Activated naive CD4-positive, alpha-beta T cell treated with anti-CD3 and anti-CD28 coated beads for 36 hours (primary cell): ENCODE measurements at regions of chr4 and their contacts with region 1.

Region 1: GRCh38 chr4:80173401-80173800 is 23.9 kb upstream of the PRDM8 start:
- DNase-seq: peak; percentile 79
- H3K4me3 Mint-ChIP-seq: no peak overlapping the region
- H3K27ac Mint-ChIP-seq: peak overlapping the region; percentile 46
- H3K4me1 Mint-ChIP-seq: peaks cover 51% of the 10 kb centered on the region
- H3K27me3 Mint-ChIP-seq: no peaks in the 10 kb centered on the region

Region 2: GRCh38 chr4:78656968-78657445 is 1516.4 kb before region 1 on chr4:
- CTCF ChIA-PET with region 1: no interaction called
- intact Hi-C with region 1: loop called (anchors 10 kb)
- DNase-seq: peak; percentile 45
- H3K4me3 Mint-ChIP-seq: peak overlapping the region; percentile 32
- H3K27ac Mint-ChIP-seq: peak overlapping the region; percentile 84
- H3K4me1 Mint-ChIP-seq: peaks cover 45% of the 10 kb centered on the region
- H3K27me3 Mint-ChIP-seq: no peaks in the 10 kb centered on the region

Region 3: DNA sequence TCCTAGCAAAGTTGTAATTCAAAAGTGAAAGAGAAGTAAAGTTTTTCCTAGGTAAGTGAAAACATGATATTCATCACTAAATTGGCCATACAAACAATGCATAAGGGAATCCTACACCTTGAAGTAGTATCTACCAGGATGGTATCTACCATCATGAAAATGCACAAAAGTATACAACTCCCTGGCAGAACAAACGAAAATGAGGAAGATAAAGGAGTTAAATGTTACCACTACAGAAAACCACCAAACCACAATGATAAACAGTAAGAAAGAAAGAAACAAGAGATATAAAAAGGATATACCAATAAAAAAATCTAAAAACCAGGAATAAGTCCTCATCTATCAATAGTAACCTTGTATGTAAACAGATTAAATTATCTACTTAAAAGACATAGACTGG is 792.2 kb before region 1 on chr4:
- CTCF ChIA-PET with region 1: no interaction called
- intact Hi-C with region 1: no loop called
- DNase-seq: no peak
- H3K4me3 Mint-ChIP-seq: no peak overlapping the region
- H3K27ac Mint-ChIP-seq: no peak overlapping the region
- H3K4me1 Mint-ChIP-seq: no peaks in the 10 kb centered on the region
- H3K27me3 Mint-ChIP-seq: no peaks in the 10 kb centered on the region

Region 4: DNA sequence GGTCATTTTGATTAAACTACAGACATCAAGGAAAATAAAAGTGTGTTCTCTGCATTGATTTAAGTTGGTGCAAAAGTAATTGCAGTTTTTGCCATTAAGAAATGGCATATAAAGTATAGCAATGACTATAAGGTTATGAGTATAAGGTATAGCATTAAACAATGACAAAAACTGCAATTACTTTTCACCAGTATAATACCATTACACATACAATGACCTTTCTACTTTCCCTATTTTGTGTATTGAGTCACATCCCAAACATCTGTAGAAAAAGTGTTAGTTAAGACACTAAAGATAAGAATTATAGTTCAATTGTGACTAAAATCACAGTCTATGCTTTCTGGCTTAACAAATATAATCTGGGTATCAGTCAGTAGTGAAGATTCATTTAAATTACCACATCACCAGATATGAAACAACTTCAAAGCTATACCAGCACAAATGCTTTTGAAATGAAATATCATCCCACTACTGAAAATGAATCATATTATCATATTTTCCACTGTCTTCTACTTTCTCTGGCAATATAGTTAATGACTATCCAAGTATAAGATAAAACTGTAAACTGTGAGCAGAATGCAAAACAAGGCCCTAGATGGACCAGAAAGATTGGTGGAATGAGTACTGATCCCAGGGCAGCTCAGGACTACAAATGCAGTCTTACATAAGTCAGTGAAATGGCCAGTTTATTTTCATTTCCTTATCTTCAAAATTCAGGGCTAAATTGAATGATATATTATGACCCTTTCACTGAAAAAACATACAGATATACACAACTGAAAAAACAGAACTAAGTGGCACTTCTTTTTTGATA is 341.5 kb before region 1 on chr4:
- CTCF ChIA-PET with region 1: no interaction called
- intact Hi-C with region 1: loop called (anchors 2 kb)
- DNase-seq: no peak
- H3K4me3 Mint-ChIP-seq: no peak overlapping the region
- H3K27ac Mint-ChIP-seq: no peak overlapping the region
- H3K4me1 Mint-ChIP-seq: peaks cover 12% of the 10 kb centered on the region
- H3K27me3 Mint-ChIP-seq: peaks cover 8% of the 10 kb centered on the region

Region 5: GRCh38 chr4:80036949-80037685 is 136.3 kb before region 1 on chr4:
- CTCF ChIA-PET with region 1: no interaction called
- intact Hi-C with region 1: loop called (anchors 1 kb)
- DNase-seq: no peak
- H3K4me3 Mint-ChIP-seq: peak overlapping the region; percentile 70
- H3K27ac Mint-ChIP-seq: peak overlapping the region; percentile 86
- H3K4me1 Mint-ChIP-seq: peaks cover 32% of the 10 kb centered on the region
- H3K27me3 Mint-ChIP-seq: no peaks in the 10 kb centered on the region

Region 6: GRCh38 chr4:80138551-80139538 is 34.6 kb before region 1 on chr4:
- CTCF ChIA-PET with region 1: no interaction called
- intact Hi-C with region 1: loop called (anchors 1 kb)
- DNase-seq: peak; percentile 82
- H3K4me3 Mint-ChIP-seq: no peak overlapping the region
- H3K27ac Mint-ChIP-seq: no peak overlapping the region
- H3K4me1 Mint-ChIP-seq: peaks cover 57% of the 10 kb centered on the region
- H3K27me3 Mint-ChIP-seq: no peaks in the 10 kb centered on the region

Region 7: GRCh38 chr4:80184053-80184790 is 10.8 kb after region 1 on chr4:
- CTCF ChIA-PET with region 1: interaction called, 54 read pairs
- intact Hi-C with region 1: loop called (anchors 1 kb)
- DNase-seq: peak; percentile 90
- H3K4me3 Mint-ChIP-seq: peak overlapping the region; percentile 97
- H3K27ac Mint-ChIP-seq: peak overlapping the region; percentile 70
- H3K4me1 Mint-ChIP-seq: peaks cover 46% of the 10 kb centered on the region
- H3K27me3 Mint-ChIP-seq: peaks cover 11% of the 10 kb centered on the region

Region 8: GRCh38 chr4:80540785-80541469 is 367.5 kb after region 1 on chr4:
- CTCF ChIA-PET with region 1: no interaction called
- intact Hi-C with region 1: loop called (anchors 1 kb)
- DNase-seq: no peak
- H3K4me3 Mint-ChIP-seq: no peak overlapping the region
- H3K27ac Mint-ChIP-seq: peak overlapping the region; percentile 41
- H3K4me1 Mint-ChIP-seq: peaks cover 48% of the 10 kb centered on the region
- H3K27me3 Mint-ChIP-seq: peaks cover 34% of the 10 kb centered on the region